Activated CD4-positive, alpha-beta T cell treated with anti-CD3 and anti-CD28 coated beads, Interleukin-2, amount 10 ng/mL, durations not matched to agents 24 days and 14 days (primary cell): ENCODE measurements at regions of chr6 and their contacts with region 1.

Region 1: DNA sequence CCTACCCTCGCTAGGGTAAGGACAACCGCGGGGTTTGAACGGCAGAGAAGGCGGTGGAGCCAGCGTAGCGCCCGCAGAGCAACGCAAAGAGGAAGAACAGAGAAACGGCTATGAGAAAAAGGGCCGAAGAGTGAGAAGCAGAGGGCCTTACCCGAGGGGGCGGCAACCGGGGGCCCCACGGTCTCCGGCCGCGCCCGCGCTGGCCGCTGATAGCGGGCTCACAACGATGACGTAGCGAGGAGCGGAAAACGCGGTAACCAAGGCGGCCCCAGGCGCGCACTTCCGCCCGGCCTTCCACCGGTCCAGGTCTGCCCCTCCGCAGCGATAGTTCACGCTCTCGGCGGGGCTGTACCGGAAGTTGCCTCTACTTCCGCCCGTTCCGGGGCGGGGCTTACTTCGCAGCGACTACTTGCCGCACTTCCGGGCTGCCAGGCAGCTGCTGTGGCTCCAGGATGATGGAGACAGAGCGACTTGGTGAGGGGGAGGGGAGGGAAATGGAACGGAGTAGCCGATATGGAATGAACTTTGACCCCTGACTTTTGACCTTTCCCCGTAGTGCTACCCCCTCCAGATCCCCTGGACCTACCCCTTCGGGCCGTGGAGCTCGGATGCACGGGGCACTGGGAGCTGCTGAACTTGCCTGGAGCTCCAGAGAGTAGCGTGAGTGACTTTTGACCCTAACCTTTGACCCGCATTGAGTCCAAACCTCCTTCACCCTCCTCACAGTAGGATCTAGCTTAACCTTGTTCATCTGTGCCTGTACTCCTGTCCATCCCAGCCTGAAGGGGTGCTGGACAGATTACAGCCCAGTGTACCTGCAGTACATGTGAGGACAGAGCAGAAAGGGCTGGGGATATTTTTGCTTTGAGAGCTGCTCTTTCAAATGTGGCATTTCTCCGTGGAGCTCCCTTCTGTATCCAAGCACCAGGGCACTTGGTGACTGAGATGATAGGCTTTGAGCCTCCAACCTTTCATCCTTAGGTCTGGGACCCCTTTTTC is at the starts of genes NELFE and SKIC2:
- DNase-seq: peak; percentile 100
- H3K4me3 Mint-ChIP-seq: peak within 1 kb of the TSS; percentile 97
- H3K27ac Mint-ChIP-seq: peak within 1 kb of the TSS; percentile 95
- H3K4me1 Mint-ChIP-seq: peaks cover 36% of the 10 kb centered on the region
- H3K27me3 Mint-ChIP-seq: no peaks in the 10 kb centered on the region
- total RNA-seq, gene NELFE: 85.8 and 88.5 TPM in 2 replicates
- total RNA-seq, gene SKIC2: 92.8 and 93.7 TPM in 2 replicates

Region 2: DNA sequence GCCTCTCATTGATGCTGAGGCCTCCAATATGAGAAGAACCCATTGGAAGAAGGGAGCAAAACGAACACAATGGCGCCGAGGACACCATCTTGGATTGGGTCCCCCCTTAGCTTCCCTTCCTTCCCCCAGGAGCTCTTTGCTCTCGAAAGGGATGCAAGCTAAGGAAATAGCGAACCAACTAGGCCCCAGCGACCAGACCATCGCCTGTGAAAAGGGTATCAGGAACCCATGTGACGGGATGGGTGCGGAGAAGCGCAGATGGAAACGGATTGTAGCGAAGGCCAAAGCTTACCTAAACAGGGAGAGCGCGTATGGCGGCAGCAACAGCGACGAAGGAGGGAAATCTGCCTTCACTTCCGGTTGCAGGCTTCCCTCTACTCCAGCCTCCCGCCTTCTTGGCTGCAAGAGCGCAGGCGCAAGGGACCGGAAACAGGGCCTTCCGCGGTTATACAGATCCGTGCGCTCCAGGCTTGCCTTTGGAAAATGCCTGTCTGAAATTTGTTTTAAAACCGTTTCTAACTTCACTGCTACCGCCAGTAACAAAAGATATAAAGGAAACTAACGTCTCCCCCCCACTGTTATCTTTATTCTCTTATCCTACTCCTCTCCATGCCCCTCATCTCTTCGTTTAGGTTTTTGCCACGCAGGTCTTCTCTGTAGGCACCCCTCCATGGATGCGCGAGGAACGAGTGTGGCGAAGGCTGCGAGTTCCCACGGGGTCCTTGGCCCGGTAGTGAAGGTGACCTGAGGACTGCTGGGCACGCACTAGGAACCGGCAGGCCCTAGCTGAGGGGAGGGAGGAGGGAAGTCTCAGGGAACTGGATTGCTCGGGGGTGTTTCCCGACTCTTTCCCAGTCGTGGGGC is 417.1 kb before region 1 on chr6 and contains the start of gene DDX39B:
- intact Hi-C with region 1: loop called (anchors 5 kb)
- DNase-seq: peak; percentile 98
- H3K4me3 Mint-ChIP-seq: peak within 1 kb of the TSS; percentile 81
- H3K27ac Mint-ChIP-seq: peak within 1 kb of the TSS; percentile 90
- H3K4me1 Mint-ChIP-seq: peaks cover 50% of the 10 kb centered on the region
- H3K27me3 Mint-ChIP-seq: no peaks in the 10 kb centered on the region
- total RNA-seq, gene DDX39B: 696 and 720 TPM in 2 replicates

Region 3: DNA sequence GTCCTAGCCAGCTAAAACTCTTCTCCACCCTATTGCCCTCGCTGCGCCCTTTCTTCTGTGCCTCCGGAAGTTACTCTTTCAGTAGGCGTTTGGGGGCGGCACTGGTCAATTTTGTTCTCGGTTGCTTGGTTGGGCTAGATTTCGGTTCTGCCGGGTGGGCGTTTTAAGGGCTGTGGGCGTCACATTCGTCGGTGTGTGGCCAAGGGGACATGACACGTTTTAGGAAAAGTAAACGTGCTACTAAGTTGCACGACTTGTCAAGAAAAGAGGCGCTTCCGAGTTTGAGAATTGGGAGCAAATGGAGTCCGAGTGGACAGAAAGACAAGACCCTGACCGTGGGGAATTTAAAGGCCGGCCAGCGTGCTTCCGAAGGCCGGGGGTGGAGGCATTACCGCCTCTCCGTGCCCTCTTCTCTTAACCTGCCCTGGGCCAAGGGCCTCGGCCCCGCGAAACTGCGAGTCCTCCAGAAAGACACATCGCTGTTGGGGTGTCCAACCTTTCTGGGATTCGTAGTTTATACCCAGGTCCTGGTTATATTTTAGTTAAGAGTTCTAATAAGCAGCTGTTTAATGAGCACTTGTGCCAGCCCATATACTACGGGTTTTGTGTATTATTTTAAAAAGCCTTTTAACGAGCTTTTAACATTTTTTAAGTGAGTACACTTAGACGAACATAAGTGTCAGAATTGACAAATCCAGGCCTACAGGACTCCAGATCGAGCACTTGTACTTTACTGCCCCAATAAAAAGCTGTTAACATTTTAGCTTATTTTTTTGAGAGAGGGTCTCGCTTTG is 305.9 kb before region 1 on chr6:
- intact Hi-C with region 1: loop called (anchors 1 kb)
- DNase-seq: no peak
- H3K4me3 Mint-ChIP-seq: peak overlapping the region; percentile 94
- H3K27ac Mint-ChIP-seq: peak overlapping the region; percentile 100
- H3K4me1 Mint-ChIP-seq: peaks cover 58% of the 10 kb centered on the region
- H3K27me3 Mint-ChIP-seq: peaks cover 3% of the 10 kb centered on the region

Region 4: DNA sequence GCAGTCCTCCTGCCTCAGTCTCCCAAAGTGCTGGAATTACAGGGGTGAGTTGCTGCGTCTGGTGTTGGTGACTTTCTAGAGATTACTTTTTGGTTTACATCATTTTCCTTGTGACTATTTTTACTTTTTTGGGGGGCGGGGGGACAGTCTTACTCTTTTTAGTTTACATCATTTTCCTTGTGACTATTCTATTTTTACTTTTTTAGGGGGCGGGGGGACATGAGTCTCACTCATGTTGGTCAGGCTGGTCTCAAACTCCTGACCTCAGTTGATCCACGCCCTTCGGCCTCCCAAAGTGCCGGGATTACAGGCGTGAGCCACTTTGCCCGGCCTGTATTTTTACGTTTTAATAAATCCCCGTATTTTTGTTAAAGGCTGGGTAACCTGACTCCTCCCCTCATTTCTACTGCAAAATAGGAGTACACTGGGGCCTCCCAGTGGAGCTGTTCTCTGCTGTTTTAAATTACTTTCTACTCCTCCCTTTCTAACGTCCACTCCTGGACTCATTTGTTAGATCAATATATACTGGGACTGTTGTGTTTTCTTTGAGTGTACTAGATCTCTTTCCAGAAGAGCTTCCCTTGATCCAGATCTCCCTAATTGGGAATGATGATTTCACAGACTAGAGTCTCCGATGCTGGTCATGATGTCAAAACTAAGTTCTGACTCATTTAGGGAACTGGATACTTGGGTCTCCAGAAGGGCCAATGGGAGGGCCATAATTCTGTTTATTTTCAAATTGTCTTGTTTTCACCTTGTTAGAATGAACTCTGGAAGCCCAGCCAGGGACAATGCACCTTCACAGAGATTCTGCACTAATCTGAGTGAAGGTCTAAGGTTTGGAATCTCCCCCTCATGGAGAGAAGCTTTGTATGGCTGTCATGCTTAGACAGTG is 122.3 kb before region 1 on chr6:
- intact Hi-C with region 1: no loop called
- DNase-seq: no peak
- H3K4me3 Mint-ChIP-seq: peak overlapping the region; percentile 97
- H3K27ac Mint-ChIP-seq: peak overlapping the region; percentile 96
- H3K4me1 Mint-ChIP-seq: peaks cover 26% of the 10 kb centered on the region
- H3K27me3 Mint-ChIP-seq: no peaks in the 10 kb centered on the region

Region 5: DNA sequence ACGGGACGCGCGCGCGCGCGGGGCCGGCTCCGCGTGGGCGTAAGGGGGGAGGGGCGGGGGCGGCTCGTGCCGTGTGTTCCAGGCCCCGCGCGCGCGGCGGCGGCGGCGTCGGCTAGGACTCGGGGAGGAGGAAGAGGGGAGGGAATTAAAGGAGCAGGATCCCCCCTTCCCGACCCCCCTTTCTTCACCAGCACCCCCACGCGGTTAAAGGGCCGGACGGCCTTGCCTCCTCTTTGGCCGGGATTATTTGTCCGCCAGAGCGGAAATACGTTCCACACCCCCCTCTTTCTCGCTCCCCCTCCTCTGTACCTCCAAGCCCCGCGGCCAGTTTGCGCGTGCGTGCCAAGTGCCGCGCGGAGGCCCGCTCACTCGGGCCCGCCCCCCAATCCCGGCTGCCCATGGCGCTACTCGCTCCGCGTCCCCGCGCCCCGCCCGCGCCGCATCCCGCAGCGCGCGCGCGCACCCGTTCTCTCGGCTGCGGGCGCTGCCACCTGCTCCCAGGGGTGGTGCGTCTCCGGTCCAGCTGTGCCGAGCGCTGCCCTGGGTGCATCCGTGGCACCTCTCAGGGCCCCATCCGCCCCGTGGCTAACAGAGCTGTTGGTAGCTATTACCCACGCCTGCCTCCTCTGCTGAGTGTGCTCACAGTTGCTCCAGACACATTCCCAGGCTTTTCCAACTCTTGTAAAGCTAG is 56.9 kb before region 1 on chr6 and contains the start of gene ZBTB12:
- intact Hi-C with region 1: loop called (anchors 2 kb)
- DNase-seq: peak; percentile 96
- H3K4me3 Mint-ChIP-seq: peak within 1 kb of the TSS; percentile 91
- H3K27ac Mint-ChIP-seq: peak within 1 kb of the TSS; percentile 91
- H3K4me1 Mint-ChIP-seq: peaks cover 31% of the 10 kb centered on the region
- H3K27me3 Mint-ChIP-seq: peaks cover 6% of the 10 kb centered on the region
- total RNA-seq, gene ZBTB12: 3.7 and 4.6 TPM in 2 replicates

Region 6: DNA sequence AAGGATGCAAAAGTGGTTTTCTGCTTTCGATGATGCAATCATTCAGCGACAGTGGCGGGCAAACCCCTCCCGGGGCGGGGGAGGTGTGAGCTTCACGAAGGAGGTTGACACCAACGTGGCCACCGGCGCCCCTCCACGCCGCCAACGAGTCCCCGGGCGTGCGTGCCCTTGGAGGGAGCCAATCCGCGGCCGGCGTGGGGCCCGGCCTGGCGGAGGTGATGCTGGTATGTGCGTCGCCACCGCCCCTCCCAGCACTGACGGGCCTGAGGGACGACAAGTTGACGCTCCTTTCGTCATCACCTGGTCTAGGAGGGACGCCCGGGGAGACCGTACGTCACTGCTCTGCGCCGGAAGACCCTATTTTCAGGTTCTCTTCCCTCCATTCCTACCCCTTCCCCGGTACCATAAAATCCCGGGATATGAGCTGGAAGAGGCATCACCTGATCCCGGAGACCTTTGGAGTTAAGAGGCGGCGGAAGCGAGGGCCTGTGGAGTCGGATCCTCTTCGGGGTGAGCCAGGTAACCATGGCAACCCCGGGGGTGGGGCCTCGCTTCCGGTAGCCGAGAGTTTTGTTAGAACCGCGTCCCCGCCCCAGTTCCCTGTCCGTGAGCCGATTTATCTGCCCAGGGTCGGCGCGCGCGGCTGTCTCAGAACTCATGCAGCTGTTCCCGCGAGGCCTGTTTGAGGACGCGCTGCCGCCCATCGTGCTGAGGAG is 13.1 kb after region 1 on chr6 and contains the start of gene DXO:
- intact Hi-C with region 1: loop called (anchors 1 kb)
- DNase-seq: peak; percentile 99
- H3K4me3 Mint-ChIP-seq: peak within 1 kb of the TSS; percentile 99
- H3K27ac Mint-ChIP-seq: peak within 1 kb of the TSS; percentile 100
- H3K4me1 Mint-ChIP-seq: peaks cover 41% of the 10 kb centered on the region
- H3K27me3 Mint-ChIP-seq: peaks cover 2% of the 10 kb centered on the region
- total RNA-seq, gene DXO: 13.2 and 14.1 TPM in 2 replicates